ENCODE measurements at regions of chr16 and their contacts with region 1.

Region 1: GRCh38 chr16:4058386-4058785 is 57.9 kb downstream of the ADCY9 start:
- DNase-seq: no peak
- H3K4me3 ChIP-seq: no peak overlapping the region
- H3K27me3 ChIP-seq: no peaks in the 10 kb centered on the region
- CTCF ChIP-seq: no peak

Region 2: DNA sequence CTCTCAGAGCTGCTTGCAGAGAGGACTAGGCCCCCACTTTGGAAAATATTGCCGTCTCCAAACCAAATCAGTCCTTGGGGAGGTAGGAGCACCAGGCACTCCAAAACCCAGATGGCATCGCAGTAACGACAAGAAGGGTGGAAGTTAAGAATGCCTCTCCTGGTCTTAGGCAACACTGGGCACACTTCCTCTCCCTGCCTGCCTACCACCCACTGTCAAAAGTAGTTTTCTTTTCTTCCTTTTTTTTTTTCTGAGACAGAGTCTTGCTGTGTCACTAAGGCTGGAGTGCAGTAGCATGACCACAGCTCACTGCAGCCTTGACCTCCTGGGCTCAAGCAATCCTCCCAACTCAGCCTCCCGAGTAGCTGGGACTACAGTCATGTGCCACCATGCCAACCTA is 136.3 kb after region 1 on chr16:
- CTCF ChIA-PET with region 1: no interaction called
- POLR2A ChIA-PET with region 1: interaction called, 10 read pairs
- DNase-seq: no peak
- H3K4me3 ChIP-seq: no peak overlapping the region
- H3K27me3 ChIP-seq: no peaks in the 10 kb centered on the region; the same call in 1 of the 2 replicates
- CTCF ChIP-seq: no peak